Kidney (tissue), 22 donors: ENCODE measurements at regions of chr1 and their contacts with region 1.

Region 1: DNA sequence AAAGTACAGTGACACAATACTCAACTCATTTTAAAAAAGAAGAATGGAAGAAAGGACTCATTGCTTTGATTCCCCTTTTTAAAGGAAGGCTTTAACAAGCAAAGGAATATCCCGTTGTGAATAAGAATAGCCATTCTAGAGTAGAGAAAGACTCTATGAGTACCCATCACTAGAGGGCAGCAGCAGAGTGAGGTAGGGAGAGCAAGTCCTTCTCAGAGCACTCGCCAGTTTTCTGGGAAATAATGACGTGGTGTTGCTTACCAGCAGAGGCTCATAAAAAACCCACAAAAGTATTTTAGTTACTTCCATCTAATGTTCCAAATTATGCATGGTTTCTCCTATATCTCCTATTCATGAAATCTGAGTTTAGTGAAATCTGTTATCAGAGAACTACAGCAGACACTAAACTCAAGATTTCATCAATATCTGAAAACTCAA is 74.6 kb downstream of the USP24 start:
- DNase-seq: peak in 4 of 5 donors; percentile 45 to 92 (median 77)
- H3K4me3 ChIP-seq: no peak overlapping the region
- H3K27ac ChIP-seq: no peak overlapping the region
- H3K4me1 ChIP-seq: no peaks in the 10 kb centered on the region
- H3K27me3 ChIP-seq: no peaks in the 10 kb centered on the region
- CTCF ChIP-seq: peak; percentile 75

Region 2: DNA sequence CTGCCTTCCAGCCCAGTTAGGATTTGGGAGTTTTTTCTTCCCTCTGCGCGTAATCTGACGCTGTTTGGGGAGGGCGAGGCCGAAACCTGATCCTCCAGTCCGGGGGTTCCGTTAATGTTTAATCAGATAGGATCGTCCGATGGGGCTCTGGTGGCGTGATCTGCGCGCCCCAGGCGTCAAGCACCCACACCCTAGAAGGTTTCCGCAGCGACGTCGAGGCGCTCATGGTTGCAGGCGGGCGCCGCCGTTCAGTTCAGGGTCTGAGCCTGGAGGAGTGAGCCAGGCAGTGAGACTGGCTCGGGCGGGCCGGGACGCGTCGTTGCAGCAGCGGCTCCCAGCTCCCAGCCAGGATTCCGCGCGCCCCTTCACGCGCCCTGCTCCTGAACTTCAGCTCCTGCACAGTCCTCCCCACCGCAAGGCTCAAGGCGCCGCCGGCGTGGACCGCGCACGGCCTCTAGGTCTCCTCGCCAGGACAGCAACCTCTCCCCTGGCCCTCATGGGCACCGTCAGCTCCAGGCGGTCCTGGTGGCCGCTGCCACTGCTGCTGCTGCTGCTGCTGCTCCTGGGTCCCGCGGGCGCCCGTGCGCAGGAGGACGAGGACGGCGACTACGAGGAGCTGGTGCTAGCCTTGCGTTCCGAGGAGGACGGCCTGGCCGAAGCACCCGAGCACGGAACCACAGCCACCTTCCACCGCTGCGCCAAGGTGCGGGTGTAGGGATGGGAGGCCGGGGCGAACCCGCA is 101.1 kb before region 1 on chr1 and contains the start of gene PCSK9:
- intact Hi-C with region 1: no loop called
- DNase-seq: peak in 4 of 5 donors; percentile 75 to 79 (median 76)
- H3K4me3 ChIP-seq: peak within 1 kb of the TSS in 1 of 3 donors; percentile 16
- H3K27ac ChIP-seq: no peak within 1 kb of the TSS
- H3K4me1 ChIP-seq: peaks cover 0 to 4% (median 0%) of the 10 kb centered on the region in 3 donors
- H3K27me3 ChIP-seq: peaks cover 16% of the 10 kb centered on the region
- CTCF ChIP-seq: no peak
- total RNA-seq, gene PCSK9: 0.28 TPM

Region 3: DNA sequence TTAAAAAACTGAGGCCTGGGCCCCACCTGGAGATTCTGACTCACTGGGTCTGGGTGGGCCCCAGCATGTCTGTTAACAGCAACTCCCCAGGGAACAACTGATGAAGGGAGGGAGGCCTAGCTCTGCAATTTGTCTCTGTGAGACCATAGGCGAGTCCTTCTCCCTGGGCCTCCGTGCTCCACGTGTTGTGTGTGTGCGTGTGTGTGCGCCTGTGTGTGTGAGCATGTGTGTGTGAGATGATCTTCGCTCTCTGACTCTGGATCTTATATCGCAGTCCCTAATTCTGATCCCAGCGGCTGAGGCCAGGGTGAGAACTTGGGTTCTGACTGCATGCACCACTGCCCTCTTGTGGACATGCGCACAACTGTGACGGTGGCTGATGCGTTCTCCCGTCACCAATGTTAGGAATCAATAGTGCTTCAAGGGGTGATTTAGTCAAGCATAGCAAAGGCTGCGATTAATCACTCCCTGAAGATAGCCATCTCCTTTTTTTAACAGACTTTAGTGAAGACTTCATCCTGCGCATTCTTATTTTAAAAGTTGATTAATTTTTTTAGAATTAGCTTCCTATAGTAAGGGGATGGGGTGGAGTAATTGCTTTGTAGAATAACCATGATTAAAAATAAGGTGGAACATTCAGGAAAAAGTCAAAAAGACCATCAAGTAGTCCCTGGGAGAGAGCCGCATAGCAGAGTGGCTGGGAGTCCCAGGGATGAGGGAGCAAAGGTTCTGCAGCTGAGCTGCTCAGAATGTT is 137.0 kb after region 1 on chr1:
- intact Hi-C with region 1: loop called (anchors 5 kb)
- DNase-seq: peak; percentile 73 to 88 (median 79)
- H3K4me3 ChIP-seq: no peak overlapping the region
- H3K27ac ChIP-seq: no peak overlapping the region
- H3K4me1 ChIP-seq: peaks cover 0 to 7% (median 2%) of the 10 kb centered on the region in 3 donors
- H3K27me3 ChIP-seq: no peaks in the 10 kb centered on the region
- CTCF ChIP-seq: peak; percentile 95